Activated T-helper 2 cell treated with anti-CD3 and anti-CD28 coated beads, Interferon-gamma antibody, Interleukin-2, Interleukin-4, amounts not matched to agents 10 μg/mL and 5 μg/mL and 100 μg/mL, durations not matched to agents 14 hours and 24 hours and 36 hours (primary cell): ENCODE measurements at regions of chr16 and their contacts with region 1.

Region 1: DNA sequence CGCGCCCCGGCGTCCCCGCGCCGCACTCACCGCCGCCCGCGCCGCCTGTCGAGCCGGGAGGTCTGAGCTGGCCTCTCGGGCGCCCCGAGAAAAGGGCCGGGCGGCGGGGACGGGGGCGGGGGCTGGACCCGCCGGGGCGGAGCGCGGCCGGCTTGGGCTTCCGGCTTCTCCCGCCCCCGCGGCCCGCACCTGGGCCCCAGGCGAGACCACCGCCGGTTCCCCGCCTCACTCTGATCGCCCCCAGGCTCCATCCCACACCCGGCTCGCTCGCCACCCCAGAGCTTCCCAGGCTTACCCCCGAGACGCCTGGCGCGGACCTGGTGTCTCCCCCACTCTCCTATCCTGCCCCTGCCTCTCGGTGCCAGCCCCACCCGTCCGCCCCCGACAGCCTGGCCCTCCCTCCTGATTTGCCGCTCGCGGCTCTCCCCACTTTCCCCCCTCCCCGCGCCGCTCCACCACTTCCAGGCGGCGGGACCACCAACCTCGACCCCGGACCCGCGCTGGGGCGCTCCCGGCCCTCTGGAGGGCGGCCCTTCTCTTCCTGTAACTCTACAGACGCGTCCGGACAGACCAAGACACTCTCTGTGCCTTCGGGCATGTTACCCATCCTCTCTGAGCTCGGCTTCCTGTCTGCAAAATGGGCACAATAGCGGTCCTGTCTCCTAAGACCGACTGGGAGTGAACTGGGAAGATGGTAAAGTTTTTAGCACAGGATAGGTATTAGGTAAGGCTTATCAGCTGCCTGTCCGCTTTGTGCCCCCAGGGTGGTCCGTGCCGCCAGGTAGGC is at the start of gene LITAF:
- DNase-seq: peak; percentile 40
- H3K4me3 Mint-ChIP-seq: peak within 1 kb of the TSS; percentile 90
- H3K27ac Mint-ChIP-seq: peak within 1 kb of the TSS; percentile 92
- H3K4me1 Mint-ChIP-seq: peaks cover 32% of the 10 kb centered on the region
- H3K27me3 Mint-ChIP-seq: peaks cover 4% of the 10 kb centered on the region
- total RNA-seq, gene LITAF: 121 and 135 TPM in 2 replicates

Region 2: DNA sequence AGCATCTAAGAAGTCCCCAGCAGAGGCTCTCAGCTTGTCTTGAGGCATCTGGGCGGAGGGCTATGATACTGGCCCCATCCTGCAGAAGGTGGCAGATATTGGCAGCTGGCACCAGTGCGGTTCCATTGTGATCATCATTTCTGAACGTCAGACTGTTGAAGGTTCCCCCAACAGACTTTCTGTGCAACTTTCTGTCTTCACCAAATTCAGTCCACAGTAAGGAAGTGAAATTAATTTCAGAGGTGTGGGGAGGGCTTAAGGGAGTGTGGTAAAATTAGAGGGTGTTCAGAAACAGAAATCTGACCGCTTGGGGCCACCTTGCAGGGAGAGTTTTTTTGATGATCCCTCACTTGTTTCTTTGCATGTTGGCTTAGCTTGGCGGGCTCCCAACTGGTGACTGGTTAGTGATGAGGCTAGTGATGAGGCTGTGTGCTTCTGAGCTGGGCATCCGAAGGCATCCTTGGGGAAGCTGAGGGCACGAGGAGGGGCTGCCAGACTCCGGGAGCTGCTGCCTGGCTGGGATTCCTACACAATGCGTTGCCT is 710.2 kb before region 1 on chr16 and contains the start of gene CIITA:
- intact Hi-C with region 1: loop called (anchors 10 kb)
- DNase-seq: peak; percentile 60
- H3K4me3 Mint-ChIP-seq: peak within 1 kb of the TSS; percentile 80
- H3K27ac Mint-ChIP-seq: peak within 1 kb of the TSS; percentile 75
- H3K4me1 Mint-ChIP-seq: peaks cover 75% of the 10 kb centered on the region
- H3K27me3 Mint-ChIP-seq: peaks cover 4% of the 10 kb centered on the region
- total RNA-seq, gene CIITA: 8.6 and 9.3 TPM in 2 replicates

Region 3: GRCh38 chr16:10981697-10982216 is 605.3 kb before region 1 on chr16:
- intact Hi-C with region 1: no loop called
- DNase-seq: peak; percentile 45
- H3K4me3 Mint-ChIP-seq: peak overlapping the region; percentile 62
- H3K27ac Mint-ChIP-seq: peak overlapping the region; percentile 74
- H3K4me1 Mint-ChIP-seq: peaks cover 72% of the 10 kb centered on the region
- H3K27me3 Mint-ChIP-seq: no peaks in the 10 kb centered on the region

Region 4: GRCh38 chr16:11076259-11077018 is 510.6 kb before region 1 on chr16:
- intact Hi-C with region 1: loop called (anchors 10 kb)
- DNase-seq: peak; percentile 70
- H3K4me3 Mint-ChIP-seq: peak overlapping the region; percentile 31
- H3K27ac Mint-ChIP-seq: peak overlapping the region; percentile 94
- H3K4me1 Mint-ChIP-seq: peaks cover 95% of the 10 kb centered on the region
- H3K27me3 Mint-ChIP-seq: no peaks in the 10 kb centered on the region

Region 5: DNA sequence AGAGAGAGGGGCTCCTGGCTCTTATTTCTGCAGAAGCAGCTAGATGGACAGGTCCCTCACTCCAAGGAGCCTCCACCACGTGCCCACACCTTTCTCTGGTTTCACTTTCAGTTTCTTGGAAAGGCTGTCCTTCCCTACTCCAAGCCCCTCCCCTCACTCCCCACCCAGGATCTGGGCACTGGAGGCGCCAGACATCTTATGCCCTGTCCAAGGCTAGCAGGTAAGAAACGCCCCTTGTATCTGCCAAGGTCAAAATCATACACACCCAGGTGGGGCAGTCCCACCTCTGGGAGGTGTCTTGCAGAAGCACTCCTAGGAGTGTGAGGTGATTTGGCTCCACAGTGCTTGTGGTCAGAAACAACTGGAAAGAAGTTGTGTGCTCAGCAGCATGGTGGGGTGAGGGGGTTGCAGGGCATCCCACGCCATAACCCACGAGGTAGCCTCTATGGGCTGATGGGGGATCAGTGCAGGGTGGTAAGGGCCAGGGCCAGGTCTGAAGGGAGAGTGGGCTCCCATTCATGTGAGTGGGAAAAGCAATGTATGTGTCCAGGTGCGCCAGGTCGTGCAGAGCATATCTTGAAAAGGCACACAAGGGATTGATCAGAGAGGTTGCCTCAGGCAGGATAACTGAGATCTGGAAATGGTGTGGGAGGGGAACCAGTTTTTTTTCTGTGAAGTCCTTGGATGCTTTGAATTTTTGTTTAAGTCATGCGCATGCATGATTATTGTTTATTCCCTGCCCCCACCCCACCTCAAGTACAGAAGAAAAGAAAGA is 274.1 kb before region 1 on chr16:
- intact Hi-C with region 1: no loop called
- DNase-seq: peak; percentile 38
- H3K4me3 Mint-ChIP-seq: no peak overlapping the region
- H3K27ac Mint-ChIP-seq: peak overlapping the region; percentile 4
- H3K4me1 Mint-ChIP-seq: peaks cover 39% of the 10 kb centered on the region
- H3K27me3 Mint-ChIP-seq: no peaks in the 10 kb centered on the region

Region 6: DNA sequence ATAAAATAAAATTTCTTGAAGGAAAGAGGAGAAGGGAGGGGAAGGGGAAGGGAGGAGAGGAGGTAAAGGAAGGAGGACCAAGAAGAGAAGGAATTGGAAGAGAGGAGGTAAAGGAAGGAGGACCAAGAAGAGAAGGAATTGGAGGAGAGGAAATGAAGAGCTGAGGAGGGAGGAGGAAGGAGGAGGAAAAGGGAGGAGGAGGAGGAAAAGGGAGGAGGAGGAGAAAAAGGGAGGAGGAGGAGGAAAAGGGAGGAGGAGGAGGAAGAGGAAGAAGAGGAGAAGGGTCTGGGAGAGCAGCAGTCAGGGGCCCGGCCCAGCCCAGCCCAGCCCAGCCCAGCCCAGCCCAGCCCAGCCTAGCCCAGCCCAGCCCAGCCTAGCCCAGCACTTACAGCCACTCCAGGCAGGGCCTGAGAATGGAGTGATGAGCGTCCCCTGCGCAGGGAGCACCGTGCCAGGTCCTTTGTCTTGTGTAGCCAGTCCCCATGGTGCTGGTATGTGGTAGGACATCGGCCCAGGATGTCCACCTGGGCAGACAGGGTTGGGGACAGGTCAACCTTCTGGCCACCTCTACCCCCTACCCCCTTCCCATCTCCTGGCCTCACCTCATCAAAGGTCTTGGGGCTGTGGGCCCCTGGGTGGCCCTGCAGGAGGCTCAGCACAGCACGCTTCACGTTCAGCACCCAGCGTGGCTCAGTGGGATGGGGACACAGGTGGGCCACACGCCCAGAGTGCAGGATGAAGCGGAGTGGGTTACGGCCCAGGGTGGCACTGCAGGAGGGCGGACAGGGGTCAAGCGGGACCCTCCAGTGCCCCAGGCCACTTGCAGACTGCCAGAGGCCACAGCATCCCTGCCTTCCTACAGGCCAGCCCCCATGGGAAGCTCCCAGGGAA is 71.3 kb before region 1 on chr16:
- intact Hi-C with region 1: no loop called
- DNase-seq: no peak
- H3K4me3 Mint-ChIP-seq: no peak overlapping the region
- H3K27ac Mint-ChIP-seq: no peak overlapping the region
- H3K4me1 Mint-ChIP-seq: no peaks in the 10 kb centered on the region
- H3K27me3 Mint-ChIP-seq: peaks cover 3% of the 10 kb centered on the region

Region 7: DNA sequence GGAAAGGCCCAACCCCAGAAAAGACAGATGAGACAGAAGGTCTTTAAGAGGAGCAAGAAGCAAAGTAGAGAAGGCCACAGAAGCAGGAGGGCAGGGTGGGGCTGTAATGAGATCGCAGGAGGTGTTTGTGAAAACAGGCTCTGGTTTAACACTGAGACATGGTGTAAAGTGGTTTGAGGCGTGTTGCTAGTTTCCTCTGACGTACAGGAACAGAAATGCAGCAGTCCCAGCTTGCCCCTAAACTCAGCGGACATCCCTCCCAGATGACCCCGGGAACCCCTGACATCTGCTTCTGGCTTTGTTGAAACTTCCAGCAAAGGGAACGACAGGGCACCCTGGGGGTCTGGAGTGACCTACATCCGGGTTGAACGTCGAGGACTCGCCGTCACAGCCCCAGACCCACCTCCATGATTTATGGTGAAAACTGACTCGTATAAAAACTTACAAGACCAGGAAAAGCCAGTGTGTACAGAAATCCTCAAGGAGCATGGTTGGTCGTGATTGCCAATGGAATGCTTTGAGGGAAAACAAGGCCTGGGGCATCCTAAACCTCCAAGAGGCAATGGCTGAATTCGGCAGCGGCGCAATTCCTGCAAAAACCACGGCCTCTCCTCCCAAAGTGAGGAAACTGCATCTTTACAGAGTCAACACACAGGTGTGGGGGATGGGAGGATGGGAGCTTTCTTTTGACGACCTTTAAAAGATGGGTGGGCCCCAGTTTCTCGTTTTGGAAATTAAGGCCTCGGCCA is 26.2 kb before region 1 on chr16:
- intact Hi-C with region 1: loop called (anchors 1 kb)
- DNase-seq: peak; percentile 64
- H3K4me3 Mint-ChIP-seq: peak overlapping the region; percentile 58
- H3K27ac Mint-ChIP-seq: peak overlapping the region; percentile 86
- H3K4me1 Mint-ChIP-seq: peaks cover 56% of the 10 kb centered on the region
- H3K27me3 Mint-ChIP-seq: no peaks in the 10 kb centered on the region

Region 8: GRCh38 chr16:11639925-11640899 is 53.2 kb after region 1 on chr16:
- intact Hi-C with region 1: loop called (anchors 5 kb)
- DNase-seq: no peak
- H3K4me3 Mint-ChIP-seq: no peak overlapping the region
- H3K27ac Mint-ChIP-seq: no peak overlapping the region
- H3K4me1 Mint-ChIP-seq: peaks cover 10% of the 10 kb centered on the region
- H3K27me3 Mint-ChIP-seq: peaks cover 8% of the 10 kb centered on the region

Region 9: DNA sequence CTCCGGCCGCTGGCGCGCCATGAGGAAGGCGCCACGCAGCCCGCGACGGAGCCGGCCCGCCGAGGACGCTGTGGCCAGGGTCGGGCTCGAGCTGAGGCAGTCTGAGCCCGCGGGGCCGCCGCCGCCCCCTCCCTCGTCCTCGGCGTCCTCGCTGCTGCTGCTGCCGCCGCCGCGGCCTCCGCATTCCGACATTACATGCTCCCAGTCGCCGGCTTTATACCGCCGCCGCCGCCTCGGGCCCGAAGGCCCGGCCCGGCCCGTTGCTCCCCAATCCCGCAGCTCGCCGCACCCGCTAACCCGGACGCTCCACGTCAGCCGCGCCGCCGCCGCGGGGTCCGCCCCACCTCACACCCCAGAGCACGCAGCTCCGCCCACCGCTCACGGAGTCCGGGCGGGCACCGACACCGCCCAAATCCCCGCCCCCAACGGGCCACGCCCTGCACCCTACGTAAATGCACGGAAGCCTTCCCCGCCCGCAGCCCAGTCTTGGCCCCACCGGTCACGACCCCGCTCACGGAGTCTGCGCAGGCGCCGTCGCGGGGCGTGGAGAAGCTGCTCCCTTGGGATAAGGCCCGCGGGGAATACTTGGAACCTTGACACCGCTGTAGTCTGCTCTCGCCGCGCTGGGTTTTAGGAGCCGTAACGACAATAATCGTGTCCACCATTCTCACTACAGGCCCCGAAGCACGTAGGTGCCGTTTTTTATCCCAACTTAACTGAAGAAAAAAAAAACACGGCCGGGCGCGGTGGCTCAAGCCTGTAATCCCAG is 155.7 kb after region 1 on chr16 and contains the start of gene TXNDC11:
- intact Hi-C with region 1: loop called (anchors 5 kb)
- DNase-seq: peak; percentile 99
- H3K4me3 Mint-ChIP-seq: peak within 1 kb of the TSS; percentile 93
- H3K27ac Mint-ChIP-seq: peak within 1 kb of the TSS; percentile 91
- H3K4me1 Mint-ChIP-seq: peaks cover 50% of the 10 kb centered on the region
- H3K27me3 Mint-ChIP-seq: no peaks in the 10 kb centered on the region
- total RNA-seq, gene TXNDC11: 48.0 and 53.0 TPM in 2 replicates

Region 10: DNA sequence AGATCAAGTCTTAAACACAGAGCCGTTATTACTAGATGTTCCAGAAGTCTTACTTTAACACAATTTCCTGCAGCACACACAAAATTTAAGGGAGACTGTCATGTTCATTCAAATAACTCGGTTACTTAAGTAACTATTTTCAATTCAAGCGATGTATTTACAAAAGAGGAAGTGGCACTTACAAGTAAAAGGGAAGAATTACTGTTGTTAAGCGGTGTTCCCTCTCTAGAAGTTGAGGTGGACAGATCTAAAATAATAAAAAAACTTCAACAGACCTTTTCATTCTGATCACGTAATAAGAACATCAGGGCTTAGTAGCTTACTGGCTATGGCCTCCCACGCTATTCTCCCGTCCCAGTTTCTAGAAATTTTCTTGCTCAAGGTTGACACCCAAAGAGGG is 181.8 kb after region 1 on chr16:
- intact Hi-C with region 1: no loop called
- DNase-seq: no peak
- H3K4me3 Mint-ChIP-seq: peak overlapping the region; percentile 3
- H3K27ac Mint-ChIP-seq: peak overlapping the region; percentile 57
- H3K4me1 Mint-ChIP-seq: peaks cover 19% of the 10 kb centered on the region
- H3K27me3 Mint-ChIP-seq: no peaks in the 10 kb centered on the region